Cardiac septum (tissue), 1 donor: ENCODE measurements at regions of chr4 and their contacts with region 1.

Region 1: GRCh38 chr4:77240469-77241066 is 83.6 kb downstream of the CCNG2 start:
- DNase-seq: peak; percentile 78

Region 2: DNA sequence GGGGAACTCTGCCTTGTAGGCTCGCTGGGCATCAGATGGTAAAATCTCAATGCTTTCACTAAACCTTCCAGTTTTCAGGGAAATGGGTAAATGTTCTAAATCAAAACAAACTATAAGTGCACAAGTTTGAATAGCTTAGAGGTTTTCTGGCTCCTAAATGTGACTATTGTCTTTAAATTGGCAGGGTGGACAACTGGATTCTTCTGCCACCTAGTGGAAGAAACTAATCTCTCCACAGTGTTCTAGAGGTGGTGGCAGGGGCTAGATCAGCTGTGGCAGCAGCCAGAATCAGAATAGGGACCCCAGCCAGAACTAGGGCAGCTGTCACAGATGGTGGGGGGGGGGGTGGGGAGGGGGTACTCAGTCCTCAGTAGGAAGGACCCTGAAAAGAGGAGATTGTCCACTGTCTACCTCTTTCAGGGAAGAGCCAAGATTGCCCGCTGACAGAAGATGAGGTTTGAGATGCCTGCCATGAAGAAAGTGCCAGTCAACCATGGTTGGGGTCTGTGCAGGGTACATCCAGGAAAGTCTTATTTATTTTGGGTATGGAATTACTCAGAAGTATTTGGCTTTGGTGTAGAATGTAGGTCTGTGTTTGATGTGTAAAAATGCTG is 117.9 kb after region 1 on chr4:
- intact Hi-C with region 1: loop called (anchors 2 kb)
- DNase-seq: no peak